Activated CD4-positive, alpha-beta T cell treated with anti-CD3 and anti-CD28 coated beads for 36 hours (primary cell): ENCODE measurements at regions of chr3 and their contacts with region 1.

Region 1: DNA sequence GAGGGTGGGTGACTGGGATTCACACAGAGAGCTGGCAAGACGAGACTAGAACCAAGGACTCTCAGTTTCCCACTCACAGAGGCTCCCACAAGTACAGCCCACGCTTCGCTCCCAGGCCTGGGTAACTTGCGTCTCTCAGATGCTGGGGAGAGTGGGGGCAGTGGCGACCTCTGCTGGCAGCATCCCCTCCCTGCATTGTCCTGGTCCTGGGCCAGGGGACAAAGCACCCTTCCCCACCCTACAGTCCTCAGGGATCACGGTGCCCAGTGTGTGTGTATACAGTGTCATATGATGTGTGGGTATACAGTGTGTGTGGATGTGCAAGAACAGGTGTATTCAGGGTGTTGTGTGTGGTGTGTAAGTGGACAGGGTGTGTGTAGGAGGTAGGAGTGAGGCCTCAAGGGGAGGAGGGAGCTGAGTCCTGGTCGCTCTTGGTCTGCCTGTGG is 12.8 kb downstream of the VILL start:
- DNase-seq: peak; percentile 72
- ATAC-seq: peak; percentile 31
- H3K4me3 Mint-ChIP-seq: no peak overlapping the region
- H3K27ac Mint-ChIP-seq: peak overlapping the region; percentile 0
- H3K4me1 Mint-ChIP-seq: peaks cover 19% of the 10 kb centered on the region
- H3K27me3 Mint-ChIP-seq: no peaks in the 10 kb centered on the region

Region 2: GRCh38 chr3:37295925-37296324 is 707.5 kb before region 1 on chr3:
- CTCF ChIA-PET with region 1: no interaction called
- POLR2A ChIA-PET with region 1: interaction called, 10 read pairs
- intact Hi-C with region 1: no loop called
- DNase-seq: no peak
- ATAC-seq: no peak
- H3K4me3 Mint-ChIP-seq: no peak overlapping the region
- H3K27ac Mint-ChIP-seq: no peak overlapping the region
- H3K4me1 Mint-ChIP-seq: peaks cover 13% of the 10 kb centered on the region
- H3K27me3 Mint-ChIP-seq: no peaks in the 10 kb centered on the region

Region 3: DNA sequence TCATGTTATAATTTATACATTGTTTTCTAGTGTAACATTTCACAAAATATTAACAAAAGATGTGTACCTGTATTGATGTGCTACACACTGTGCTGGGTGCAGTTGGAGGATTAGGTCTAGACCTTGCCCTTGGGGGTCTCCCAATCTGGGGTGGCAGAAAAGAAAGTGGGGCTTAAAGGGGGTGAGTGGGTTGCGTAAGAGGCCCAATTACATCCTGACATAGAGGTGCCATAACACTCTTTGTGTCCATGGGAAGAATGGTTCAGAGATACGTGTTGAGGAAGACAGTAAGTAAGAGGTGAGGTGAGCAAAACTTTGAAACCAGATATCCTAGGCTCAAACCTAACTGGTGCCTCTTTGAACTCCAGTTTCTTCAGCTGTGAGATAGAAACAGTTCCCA is 66.6 kb after region 1 on chr3:
- CTCF ChIA-PET with region 1: no interaction called
- POLR2A ChIA-PET with region 1: no interaction called
- intact Hi-C with region 1: no loop called
- DNase-seq: no peak
- ATAC-seq: no peak
- H3K4me3 Mint-ChIP-seq: no peak overlapping the region
- H3K27ac Mint-ChIP-seq: no peak overlapping the region
- H3K4me1 Mint-ChIP-seq: no peaks in the 10 kb centered on the region
- H3K27me3 Mint-ChIP-seq: no peaks in the 10 kb centered on the region